Naive thymus-derived CD4-positive, alpha-beta T cell (primary cell): ENCODE measurements at regions of chrX and their contacts with region 1.

Region 1: DNA sequence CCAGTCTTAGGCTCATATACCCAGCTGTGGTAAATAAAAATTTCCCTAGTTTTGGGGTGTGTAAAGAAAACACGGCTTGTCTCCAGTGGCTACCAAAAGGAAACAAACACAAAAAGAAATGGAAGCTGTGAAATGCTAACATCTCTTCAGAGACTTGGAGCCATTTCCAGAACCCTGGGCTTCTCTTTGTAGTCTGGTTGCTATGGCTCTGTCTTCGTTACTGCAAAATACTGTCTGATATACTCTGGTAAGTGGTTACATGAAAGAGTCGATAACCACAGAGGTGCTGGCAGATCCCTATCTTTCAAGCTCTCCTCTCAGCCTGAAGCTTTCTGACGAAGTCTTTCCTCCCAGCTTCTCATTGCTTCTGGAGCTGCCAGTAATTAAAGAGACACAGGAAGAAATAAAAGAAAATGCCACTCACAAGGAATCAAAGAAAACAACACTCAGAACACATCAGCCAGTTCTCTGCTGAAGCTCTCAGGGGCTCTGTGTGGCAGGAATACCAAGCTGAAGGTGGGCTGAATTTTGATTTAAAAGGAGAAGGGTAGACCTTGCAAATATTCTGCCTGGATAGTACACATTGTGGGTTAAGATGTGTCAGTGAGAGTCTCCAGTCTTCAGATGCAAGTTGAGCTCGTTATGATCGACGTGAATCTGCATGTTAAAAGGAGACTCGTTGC is 107.5 kb upstream of the FAM9C start:
- DNase-seq: peak in 7 of 9 donors; percentile 51 to 82 (median 80)
- ATAC-seq: peak; percentile 96
- H3K4me3 ChIP-seq: no peak overlapping the region
- H3K4me3 Mint-ChIP-seq: peak overlapping the region; percentile 46 to 77 (median 68)
- H3K27ac ChIP-seq: peak overlapping the region; percentile 55
- H3K27ac Mint-ChIP-seq: peak overlapping the region; percentile 78 to 94 (median 85)
- H3K4me1 ChIP-seq: peaks cover 7 to 8% of the 10 kb centered on the region in 2 donors
- H3K4me1 Mint-ChIP-seq: peaks cover 0 to 31% (median 18%) of the 10 kb centered on the region in 7 donors
- H3K27me3 ChIP-seq: no peaks in the 10 kb centered on the region
- H3K27me3 Mint-ChIP-seq: no peaks in the 10 kb centered on the region

Region 2: DNA sequence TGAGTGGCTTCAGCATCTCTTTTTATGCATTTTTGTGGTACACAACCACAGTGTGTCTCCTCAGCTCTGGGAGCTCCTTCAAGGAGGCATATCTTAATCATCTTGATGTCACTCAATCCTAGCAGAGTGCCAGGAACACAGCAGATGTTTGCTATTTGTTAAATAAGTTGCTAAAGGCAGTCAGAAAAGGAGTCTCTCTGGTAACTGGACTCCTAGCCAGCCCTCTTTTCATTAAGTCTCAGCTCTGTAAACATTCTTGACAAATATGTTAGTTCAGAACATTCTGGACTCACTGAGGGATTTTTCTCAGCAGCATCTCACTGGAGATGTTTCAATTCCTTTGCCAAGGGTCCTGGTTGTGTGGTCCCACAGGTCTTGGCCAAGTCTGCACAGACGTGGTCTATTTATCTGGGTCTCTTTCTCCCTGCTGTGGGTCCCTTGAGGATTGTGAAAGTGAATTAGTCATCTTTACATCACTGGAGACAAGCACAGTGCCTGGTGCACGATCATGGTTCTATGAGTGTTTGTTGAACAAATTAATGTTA is 87.3 kb before region 1 on chrX:
- CTCF ChIA-PET with region 1: no interaction called
- POLR2A ChIA-PET with region 1: no interaction called
- intact Hi-C with region 1: no loop called
- DNase-seq: no peak
- ATAC-seq: no peak
- H3K4me3 ChIP-seq: no peak overlapping the region
- H3K4me3 Mint-ChIP-seq: peak overlapping the region in 1 of 10 donors; percentile 27
- H3K27ac ChIP-seq: no peak overlapping the region
- H3K27ac Mint-ChIP-seq: peak overlapping the region in 3 of 9 donors; percentile 53 to 55 (median 54)
- H3K4me1 ChIP-seq: peaks cover 0 to 12% of the 10 kb centered on the region in 2 donors
- H3K4me1 Mint-ChIP-seq: peaks cover 13 to 55% (median 43%) of the 10 kb centered on the region in 7 donors
- H3K27me3 ChIP-seq: no peaks in the 10 kb centered on the region
- H3K27me3 Mint-ChIP-seq: no peaks in the 10 kb centered on the region

Region 3: GRCh38 chrX:13123857-13124345 is 28.1 kb before region 1 on chrX:
- CTCF ChIA-PET with region 1: interaction called, 5 read pairs
- POLR2A ChIA-PET with region 1: interaction called, 3 read pairs
- intact Hi-C with region 1: loop called in 1 of 2 experiments (anchors 2 kb)
- DNase-seq: peak in 4 of 9 donors; percentile 14 to 33 (median 24)
- ATAC-seq: peak; percentile 29
- H3K4me3 ChIP-seq: peak overlapping the region; percentile 29
- H3K4me3 Mint-ChIP-seq: peak overlapping the region; percentile 18 to 76 (median 66)
- H3K27ac ChIP-seq: peak overlapping the region; percentile 52
- H3K27ac Mint-ChIP-seq: peak overlapping the region; percentile 84 to 95 (median 91)
- H3K4me1 ChIP-seq: peaks cover 19 to 25% of the 10 kb centered on the region in 2 donors
- H3K4me1 Mint-ChIP-seq: peaks cover 5 to 65% (median 48%) of the 10 kb centered on the region in 7 donors
- H3K27me3 ChIP-seq: no peaks in the 10 kb centered on the region
- H3K27me3 Mint-ChIP-seq: no peaks in the 10 kb centered on the region

Region 4: GRCh38 chrX:13131396-13132137 is 20.4 kb before region 1 on chrX:
- CTCF ChIA-PET with region 1: no interaction called
- POLR2A ChIA-PET with region 1: no interaction called
- intact Hi-C with region 1: loop called in 1 of 2 experiments (anchors 2 kb)
- DNase-seq: peak in 1 of 9 donors; percentile 13
- ATAC-seq: peak; percentile 73
- H3K4me3 ChIP-seq: no peak overlapping the region
- H3K4me3 Mint-ChIP-seq: peak overlapping the region in 3 of 10 donors; percentile 6 to 59 (median 20)
- H3K27ac ChIP-seq: no peak overlapping the region
- H3K27ac Mint-ChIP-seq: peak overlapping the region in 5 of 9 donors; percentile 16 to 86 (median 52)
- H3K4me1 ChIP-seq: no peaks in the 10 kb centered on the region
- H3K4me1 Mint-ChIP-seq: peaks cover 5 to 40% (median 25%) of the 10 kb centered on the region in 7 donors
- H3K27me3 ChIP-seq: no peaks in the 10 kb centered on the region
- H3K27me3 Mint-ChIP-seq: no peaks in the 10 kb centered on the region

Region 5: GRCh38 chrX:13167481-13168231 is 15.7 kb after region 1 on chrX:
- CTCF ChIA-PET with region 1: no interaction called
- POLR2A ChIA-PET with region 1: interaction called, 5 read pairs
- intact Hi-C with region 1: loop called in 1 of 2 experiments (anchors 1 kb)
- DNase-seq: peak in 3 of 9 donors; percentile 12 to 42 (median 22)
- ATAC-seq: peak; percentile 61
- H3K4me3 ChIP-seq: peak overlapping the region; percentile 19
- H3K4me3 Mint-ChIP-seq: peak overlapping the region; percentile 52 to 79 (median 64)
- H3K27ac ChIP-seq: peak overlapping the region; percentile 56
- H3K27ac Mint-ChIP-seq: peak overlapping the region; percentile 52 to 94 (median 86)
- H3K4me1 ChIP-seq: peaks cover 0 to 11% of the 10 kb centered on the region in 2 donors
- H3K4me1 Mint-ChIP-seq: peaks cover 0 to 26% (median 23%) of the 10 kb centered on the region in 7 donors
- H3K27me3 ChIP-seq: no peaks in the 10 kb centered on the region
- H3K27me3 Mint-ChIP-seq: no peaks in the 10 kb centered on the region